Heart right ventricle (tissue), 16 donors: ENCODE measurements at regions of chr15 and their contacts with region 1.

Region 1: DNA sequence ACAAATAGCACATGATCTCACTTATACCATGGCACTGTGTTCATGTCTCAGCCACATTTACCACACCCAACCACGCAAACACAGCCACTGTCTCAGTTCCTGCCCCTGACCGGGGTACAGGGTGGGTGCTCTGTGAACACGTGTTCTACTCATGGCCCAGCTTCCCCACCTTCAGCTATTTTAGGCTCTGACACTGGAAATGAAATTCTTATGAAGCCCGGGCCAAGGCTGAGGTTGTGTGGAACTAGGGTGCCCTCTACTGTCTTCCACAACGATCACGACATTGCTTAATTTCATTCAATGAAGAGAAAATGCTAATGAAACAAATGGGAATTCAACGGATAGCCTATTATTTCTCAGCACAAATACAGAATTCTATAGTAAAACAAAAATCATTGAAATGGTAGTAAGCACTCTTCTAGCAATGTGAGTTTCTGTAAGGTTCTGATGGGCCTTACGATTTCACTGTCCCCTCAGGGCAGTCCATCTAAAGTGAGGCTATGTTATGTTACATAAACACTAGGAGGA is 2.1 kb upstream of the GABRA5 start:
- DNase-seq: peak in 1 of 2 donors; percentile 11
- ATAC-seq: peak; percentile 58 to 80 (median 70)
- H3K4me3 ChIP-seq: no peak overlapping the region
- H3K27ac ChIP-seq: no peak overlapping the region
- H3K4me1 ChIP-seq: peaks cover 0 to 7% (median 0%) of the 10 kb centered on the region in 9 donors
- H3K27me3 ChIP-seq: peaks cover 17 to 52% (median 45%) of the 10 kb centered on the region in 7 donors
- CTCF ChIP-seq: peak; percentile 14 to 66 (median 55)

Region 2: DNA sequence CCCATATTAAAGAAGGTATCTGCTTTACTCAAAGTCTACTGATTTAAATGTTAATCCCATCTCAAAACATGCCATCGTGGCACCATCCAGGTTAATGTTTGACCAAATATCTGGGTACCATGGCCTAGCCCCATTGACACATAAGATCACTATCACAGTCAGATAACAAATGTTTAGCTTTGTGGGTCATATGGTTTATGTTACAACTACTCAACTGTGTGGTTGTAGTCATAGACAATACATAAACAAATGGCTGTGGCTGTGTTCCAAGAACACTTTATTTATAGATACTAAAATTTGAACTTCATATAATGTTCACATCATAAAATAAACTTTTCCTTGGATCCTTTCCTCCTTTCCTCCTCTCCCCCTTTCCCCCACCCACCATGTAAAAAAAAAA is 1919.8 kb before region 1 on chr15:
- intact Hi-C with region 1: no loop called
- DNase-seq: no peak
- ATAC-seq: no peak
- H3K4me3 ChIP-seq: no peak overlapping the region
- H3K27ac ChIP-seq: no peak overlapping the region
- H3K4me1 ChIP-seq: no peaks in the 10 kb centered on the region
- H3K27me3 ChIP-seq: no peaks in the 10 kb centered on the region
- CTCF ChIP-seq: no peak

Region 3: GRCh38 chr15:25947323-25948314 is 917.1 kb before region 1 on chr15:
- intact Hi-C with region 1: loop called in 3 of 10 experiments (anchors 10 kb)
- DNase-seq: no peak
- ATAC-seq: no peak
- H3K4me3 ChIP-seq: no peak overlapping the region
- H3K27ac ChIP-seq: no peak overlapping the region
- H3K4me1 ChIP-seq: no peaks in the 10 kb centered on the region
- H3K27me3 ChIP-seq: peaks cover 0 to 9% (median 0%) of the 10 kb centered on the region in 7 donors
- CTCF ChIP-seq: peak in 2 of 9 donors; percentile 17 to 22

Region 4: GRCh38 chr15:26294059-26294689 is 570.6 kb before region 1 on chr15:
- intact Hi-C with region 1: loop called in 1 of 10 experiments (anchors 10 kb)
- DNase-seq: peak; percentile 19 to 37
- ATAC-seq: peak; percentile 70 to 97 (median 90)
- H3K4me3 ChIP-seq: no peak overlapping the region
- H3K27ac ChIP-seq: no peak overlapping the region
- H3K4me1 ChIP-seq: peaks cover 0 to 4% (median 0%) of the 10 kb centered on the region in 9 donors
- H3K27me3 ChIP-seq: no peaks in the 10 kb centered on the region
- CTCF ChIP-seq: peak in 8 of 9 donors; percentile 16 to 59 (median 22)

Region 5: DNA sequence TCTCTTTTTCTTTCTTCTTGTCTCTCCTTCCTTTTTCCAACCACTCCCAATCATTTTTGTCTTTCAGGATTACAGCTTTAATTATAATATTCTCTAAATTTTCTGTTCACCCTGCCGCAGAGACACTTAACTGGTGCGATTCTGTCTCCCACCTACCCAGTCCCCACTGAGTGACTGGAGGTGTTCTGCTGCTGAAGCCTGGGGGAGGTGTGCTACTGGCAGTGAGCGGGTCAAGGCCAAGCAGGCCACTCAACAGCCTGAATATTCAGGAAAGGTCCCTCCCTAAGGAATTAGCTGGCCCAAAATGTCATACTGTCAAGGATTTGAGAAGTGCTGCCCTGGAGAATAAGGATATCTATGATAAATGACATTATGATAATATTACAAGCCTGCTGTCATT is 232.8 kb after region 1 on chr15:
- intact Hi-C with region 1: no loop called
- DNase-seq: no peak
- ATAC-seq: no peak
- H3K4me3 ChIP-seq: no peak overlapping the region
- H3K27ac ChIP-seq: no peak overlapping the region
- H3K4me1 ChIP-seq: no peaks in the 10 kb centered on the region
- H3K27me3 ChIP-seq: peaks cover 0 to 3% (median 0%) of the 10 kb centered on the region in 7 donors
- CTCF ChIP-seq: no peak